ENCODE measurements at regions of chr14 and their contacts with region 1.

Region 1: DNA sequence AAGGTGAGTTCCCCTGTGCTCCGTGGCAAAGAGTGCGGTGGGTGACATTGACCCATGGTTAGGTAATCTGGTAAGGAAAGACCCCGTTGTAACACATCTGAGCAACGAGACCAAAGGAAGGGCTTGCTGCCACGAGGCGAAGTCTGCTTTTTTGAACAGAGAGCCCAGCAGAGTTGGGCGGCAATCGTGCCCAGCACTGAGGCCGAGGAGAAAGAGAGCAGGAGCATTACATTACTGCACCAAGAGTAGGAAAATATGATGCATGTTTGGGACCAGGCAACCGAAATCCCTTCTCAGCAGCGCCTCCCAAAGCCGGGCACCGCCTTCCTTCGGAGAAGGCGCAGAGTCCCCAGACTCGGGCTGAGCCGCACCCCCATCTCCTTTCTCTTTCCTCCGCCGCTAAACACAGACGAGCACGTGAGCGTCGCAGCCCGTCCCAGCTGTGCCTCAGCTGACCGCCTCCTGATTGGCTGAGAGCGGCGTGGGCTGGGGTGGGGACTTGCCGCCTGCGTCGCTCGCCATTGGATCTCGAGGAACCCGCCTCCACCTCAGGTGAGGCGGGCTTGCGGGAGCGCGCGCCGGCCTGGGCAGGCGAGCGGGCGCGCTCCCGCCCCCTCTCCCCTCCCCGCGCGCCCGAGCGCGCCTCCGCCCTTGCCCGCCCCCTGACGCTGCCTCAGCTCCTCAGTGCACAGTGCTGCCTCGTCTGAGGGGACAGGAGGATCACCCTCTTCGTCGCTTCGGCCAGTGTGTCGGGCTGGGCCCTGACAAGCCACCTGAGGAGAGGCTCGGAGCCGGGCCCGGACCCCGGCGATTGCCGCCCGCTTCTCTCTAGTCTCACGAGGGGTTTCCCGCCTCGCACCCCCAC is at the start of gene HIF1A:
- DNase-seq: peak; percentile 99
- H3K4me3 Mint-ChIP-seq: peak within 1 kb of the TSS; percentile 88
- H3K27ac Mint-ChIP-seq: peak within 1 kb of the TSS; percentile 99
- H3K4me1 Mint-ChIP-seq: peaks cover 46% of the 10 kb centered on the region
- H3K27me3 Mint-ChIP-seq: peaks cover 3% of the 10 kb centered on the region
- total RNA-seq, gene HIF1A: 175 and 181 TPM in 2 replicates

Region 2: GRCh38 chr14:60800409-60800808 is 894.7 kb before region 1 on chr14:
- intact Hi-C with region 1: no loop called
- DNase-seq: no peak
- H3K4me3 Mint-ChIP-seq: no peak overlapping the region
- H3K27ac Mint-ChIP-seq: no peak overlapping the region
- H3K4me1 Mint-ChIP-seq: no peaks in the 10 kb centered on the region
- H3K27me3 Mint-ChIP-seq: no peaks in the 10 kb centered on the region

Region 3: DNA sequence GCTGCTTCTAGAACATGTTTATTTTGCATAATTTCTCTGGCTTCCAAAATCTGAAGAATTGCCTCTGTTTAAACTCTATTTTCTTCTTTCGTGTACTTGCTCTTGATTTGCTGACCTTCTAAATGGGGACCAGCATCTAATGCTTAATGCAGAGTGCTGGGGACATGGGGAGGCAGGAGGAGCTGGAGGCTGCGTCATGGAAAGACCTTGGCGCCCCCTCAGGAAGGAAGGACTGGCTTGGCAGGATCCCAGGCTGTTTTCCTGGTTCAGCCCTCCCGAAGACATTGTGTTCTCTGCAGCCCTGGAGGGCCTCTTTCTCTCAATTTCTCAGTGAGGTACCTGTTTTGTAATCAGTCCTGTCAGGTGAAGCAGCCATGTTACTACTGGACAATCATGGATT is 368.2 kb before region 1 on chr14:
- intact Hi-C with region 1: loop called (anchors 5 kb)
- DNase-seq: peak; percentile 69
- H3K4me3 Mint-ChIP-seq: peak overlapping the region; percentile 87
- H3K27ac Mint-ChIP-seq: peak overlapping the region; percentile 90
- H3K4me1 Mint-ChIP-seq: peaks cover 59% of the 10 kb centered on the region
- H3K27me3 Mint-ChIP-seq: no peaks in the 10 kb centered on the region

Region 4: DNA sequence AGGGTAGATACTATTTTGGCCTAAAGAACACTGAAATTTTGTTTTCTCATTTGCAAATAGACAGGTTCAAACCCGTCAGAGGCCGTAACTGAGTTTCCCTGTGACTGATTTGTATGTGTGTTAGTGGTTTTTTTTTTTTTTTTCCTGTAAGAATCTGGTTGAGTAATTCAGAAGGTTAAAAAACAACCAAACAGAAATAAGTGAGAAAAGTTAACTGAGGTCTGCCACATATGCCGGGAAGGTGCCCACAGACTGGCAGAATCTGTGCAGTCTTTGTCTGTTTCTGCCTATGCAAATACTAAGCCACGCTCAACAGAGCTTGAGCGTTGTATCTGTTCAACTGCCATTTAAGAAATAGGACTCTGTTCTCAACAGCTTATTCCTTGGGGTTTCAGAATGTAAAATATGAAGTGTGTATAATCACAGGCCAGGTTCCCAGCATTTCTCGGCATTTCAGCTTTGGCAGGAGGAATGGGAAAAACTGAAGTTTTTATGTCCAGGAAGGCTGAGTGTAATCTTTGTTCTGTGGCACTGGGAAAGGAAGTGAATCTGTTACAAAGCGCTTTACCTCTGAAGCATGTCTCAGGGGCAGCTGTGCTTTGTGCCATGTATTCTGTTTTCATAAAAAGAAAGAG is 191.8 kb before region 1 on chr14:
- intact Hi-C with region 1: loop called (anchors 1 kb)
- DNase-seq: peak; percentile 84
- H3K4me3 Mint-ChIP-seq: peak overlapping the region; percentile 76
- H3K27ac Mint-ChIP-seq: peak overlapping the region; percentile 95
- H3K4me1 Mint-ChIP-seq: peaks cover 79% of the 10 kb centered on the region
- H3K27me3 Mint-ChIP-seq: no peaks in the 10 kb centered on the region

Region 5: GRCh38 chr14:61620130-61620946 is 74.7 kb before region 1 on chr14:
- intact Hi-C with region 1: loop called (anchors 2 kb)
- DNase-seq: peak; percentile 69
- H3K4me3 Mint-ChIP-seq: peak overlapping the region; percentile 39
- H3K27ac Mint-ChIP-seq: peak overlapping the region; percentile 74
- H3K4me1 Mint-ChIP-seq: peaks cover 34% of the 10 kb centered on the region
- H3K27me3 Mint-ChIP-seq: no peaks in the 10 kb centered on the region

Region 6: DNA sequence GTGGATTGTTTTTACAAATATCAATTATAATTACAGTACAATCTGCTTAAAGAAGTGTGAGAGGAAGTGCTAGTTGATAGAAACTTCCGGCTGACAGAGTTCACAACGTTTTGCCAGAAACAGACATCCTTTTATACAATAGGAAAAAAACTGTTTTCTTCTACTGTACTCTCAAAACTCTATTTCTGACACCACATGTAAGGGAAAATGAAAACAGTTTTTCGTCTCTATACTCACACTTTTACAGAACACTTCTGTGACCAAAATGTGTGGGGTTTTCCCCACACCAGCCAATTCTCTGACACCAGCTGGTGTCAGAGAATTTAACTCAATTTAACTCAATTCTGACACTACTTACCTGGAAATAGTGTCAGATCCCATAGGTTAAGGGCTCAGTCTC is 24.0 kb before region 1 on chr14:
- intact Hi-C with region 1: loop called (anchors 1 kb)
- DNase-seq: peak; percentile 84
- H3K4me3 Mint-ChIP-seq: no peak overlapping the region
- H3K27ac Mint-ChIP-seq: no peak overlapping the region
- H3K4me1 Mint-ChIP-seq: peaks cover 23% of the 10 kb centered on the region
- H3K27me3 Mint-ChIP-seq: no peaks in the 10 kb centered on the region

Region 7: GRCh38 chr14:61706096-61706690 is 11.1 kb after region 1 on chr14:
- intact Hi-C with region 1: no loop called
- DNase-seq: no peak
- H3K4me3 Mint-ChIP-seq: peak overlapping the region; percentile 5
- H3K27ac Mint-ChIP-seq: peak overlapping the region; percentile 2
- H3K4me1 Mint-ChIP-seq: peaks cover 69% of the 10 kb centered on the region
- H3K27me3 Mint-ChIP-seq: no peaks in the 10 kb centered on the region

Region 8: DNA sequence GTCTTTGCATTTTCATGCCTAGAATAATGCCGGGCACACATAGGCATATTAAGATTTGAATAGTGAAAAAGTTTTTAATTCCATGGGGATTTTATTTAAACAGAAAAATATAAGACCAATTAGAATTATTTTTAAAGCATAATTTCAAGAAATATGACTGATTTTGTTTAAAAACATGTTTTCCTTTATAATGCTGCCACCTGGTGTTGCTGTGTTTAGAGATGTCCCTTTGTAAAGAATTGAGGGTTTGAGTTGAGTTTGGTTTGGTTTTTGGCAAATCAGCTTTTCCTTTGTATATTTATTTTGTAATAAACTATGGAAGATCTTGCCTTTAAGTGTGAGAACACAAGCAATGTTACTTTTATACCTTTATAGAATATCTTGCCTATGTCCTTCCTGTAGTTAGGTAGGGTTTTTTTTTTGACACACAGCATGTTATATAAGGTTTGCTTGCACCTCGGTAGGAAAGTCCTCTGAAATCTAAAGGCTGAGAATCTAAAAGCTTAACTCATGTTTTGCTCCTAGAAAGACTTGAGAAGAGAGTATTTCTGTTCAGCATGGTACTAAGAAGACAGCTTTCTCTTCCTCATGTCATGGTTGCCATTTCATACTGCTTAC is 35.8 kb after region 1 on chr14:
- intact Hi-C with region 1: loop called (anchors 2 kb)
- DNase-seq: no peak
- H3K4me3 Mint-ChIP-seq: no peak overlapping the region
- H3K27ac Mint-ChIP-seq: peak overlapping the region; percentile 9
- H3K4me1 Mint-ChIP-seq: peaks cover 56% of the 10 kb centered on the region
- H3K27me3 Mint-ChIP-seq: no peaks in the 10 kb centered on the region

Region 9: DNA sequence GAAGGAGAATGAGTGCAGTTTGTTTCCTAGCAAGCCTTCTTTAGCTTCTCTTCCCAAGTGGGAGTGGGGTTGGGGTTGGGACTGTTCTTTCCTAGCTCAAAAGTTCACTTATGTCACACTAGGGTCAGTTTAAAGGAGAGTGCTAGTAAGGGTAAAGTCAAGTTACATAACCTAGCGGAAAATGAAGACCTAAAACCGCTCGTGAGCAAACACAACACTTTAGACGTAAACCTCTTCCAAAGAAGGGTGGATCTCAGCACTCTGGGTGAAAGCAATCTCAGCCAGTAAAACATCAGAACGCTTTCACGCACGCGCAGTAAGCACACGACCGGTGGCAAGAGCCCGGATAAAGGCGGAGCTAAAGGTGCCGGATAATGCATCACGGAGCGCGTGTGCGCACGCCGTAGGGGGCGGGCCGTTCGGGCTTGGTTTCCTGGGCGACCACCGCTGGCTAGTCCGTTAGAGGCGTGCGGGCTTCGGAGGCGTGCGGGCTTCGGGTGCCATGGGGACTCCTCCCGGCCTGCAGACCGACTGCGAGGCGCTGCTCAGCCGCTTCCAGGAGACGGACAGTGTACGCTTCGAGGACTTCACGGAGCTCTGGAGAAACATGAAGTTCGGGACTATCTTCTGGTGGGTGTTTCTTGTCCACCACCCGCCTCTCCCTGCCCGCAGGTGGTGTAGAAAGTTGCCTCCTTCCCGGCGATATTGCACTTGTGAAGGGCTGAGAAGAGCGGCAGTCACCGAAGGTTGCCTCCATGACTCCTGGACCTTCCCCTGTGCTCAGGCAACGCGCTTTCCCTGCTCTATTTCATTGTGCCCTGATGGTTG is 67.1 kb after region 1 on chr14 and contains the start of gene SNAPC1:
- intact Hi-C with region 1: loop called (anchors 1 kb)
- DNase-seq: peak; percentile 100
- H3K4me3 Mint-ChIP-seq: peak within 1 kb of the TSS; percentile 88
- H3K27ac Mint-ChIP-seq: peak within 1 kb of the TSS; percentile 97
- H3K4me1 Mint-ChIP-seq: peaks cover 40% of the 10 kb centered on the region
- H3K27me3 Mint-ChIP-seq: no peaks in the 10 kb centered on the region
- total RNA-seq, gene SNAPC1: 12.1 and 12.3 TPM in 2 replicates

Measured in activated CD4-positive, alpha-beta T cell treated with anti-CD3 and anti-CD28 coated beads, Interleukin-2, amount 10 ng/mL, durations not matched to agents 24 days and 14 days (primary cell).